CD4-positive, alpha-beta T cell (primary cell): ENCODE measurements at regions of chr1 and their contacts with region 1.

Region 1: GRCh38 chr1:201042779-201043461 is 19.4 kb upstream of the KIF21B start:
- DNase-seq: peak; percentile 60 to 86 (median 66)
- ATAC-seq: peak; percentile 99
- H3K4me3 ChIP-seq: no peak overlapping the region
- H3K4me3 Mint-ChIP-seq: no peak overlapping the region
- H3K27ac ChIP-seq: no peak overlapping the region
- H3K27ac Mint-ChIP-seq: no peak overlapping the region
- H3K4me1 ChIP-seq: peaks cover 7% of the 10 kb centered on the region
- H3K4me1 Mint-ChIP-seq: peaks cover 6% of the 10 kb centered on the region
- H3K27me3 ChIP-seq: no peaks in the 10 kb centered on the region
- H3K27me3 Mint-ChIP-seq: no peaks in the 10 kb centered on the region
- CTCF ChIP-seq: peak; percentile 90

Region 2: DNA sequence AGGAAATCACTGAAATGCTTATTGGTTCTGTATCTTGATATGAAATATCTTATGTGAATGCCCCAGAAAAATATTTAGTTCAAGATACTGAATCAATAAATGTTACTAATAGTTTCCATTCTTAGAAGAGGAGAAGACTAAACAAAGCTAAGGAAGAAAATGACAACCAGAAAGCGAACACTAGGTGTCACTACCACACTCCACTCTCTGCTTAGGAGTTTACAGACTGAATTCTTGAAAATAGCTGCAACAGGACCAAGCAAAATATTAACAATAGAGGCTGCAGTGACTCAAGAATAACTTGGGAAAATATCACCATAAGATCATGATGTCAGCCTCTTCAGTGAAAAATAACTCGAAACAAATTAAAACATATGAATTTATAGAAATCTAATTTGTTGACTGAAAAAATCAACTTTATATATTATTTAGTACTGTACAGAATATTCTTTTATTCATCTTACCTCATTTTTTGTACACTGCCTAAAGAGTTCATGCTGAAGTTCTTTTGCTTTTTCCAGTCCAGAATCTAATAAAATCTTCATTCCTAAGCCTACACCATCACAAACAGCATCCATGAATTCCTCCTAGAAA is 484.0 kb before region 1 on chr1:
- CTCF ChIA-PET with region 1: no interaction called
- POLR2A ChIA-PET with region 1: no interaction called
- intact Hi-C with region 1: loop called in 1 of 2 experiments (anchors 5 kb)
- DNase-seq: peak in 4 of 14 experiments; percentile 10 to 58 (median 45)
- ATAC-seq: no peak
- H3K4me3 ChIP-seq: no peak overlapping the region
- H3K4me3 Mint-ChIP-seq: no peak overlapping the region
- H3K27ac ChIP-seq: no peak overlapping the region
- H3K27ac Mint-ChIP-seq: no peak overlapping the region
- H3K4me1 ChIP-seq: no peaks in the 10 kb centered on the region
- H3K4me1 Mint-ChIP-seq: no peaks in the 10 kb centered on the region
- H3K27me3 ChIP-seq: no peaks in the 10 kb centered on the region
- H3K27me3 Mint-ChIP-seq: no peaks in the 10 kb centered on the region
- CTCF ChIP-seq: peak; percentile 67

Region 3: DNA sequence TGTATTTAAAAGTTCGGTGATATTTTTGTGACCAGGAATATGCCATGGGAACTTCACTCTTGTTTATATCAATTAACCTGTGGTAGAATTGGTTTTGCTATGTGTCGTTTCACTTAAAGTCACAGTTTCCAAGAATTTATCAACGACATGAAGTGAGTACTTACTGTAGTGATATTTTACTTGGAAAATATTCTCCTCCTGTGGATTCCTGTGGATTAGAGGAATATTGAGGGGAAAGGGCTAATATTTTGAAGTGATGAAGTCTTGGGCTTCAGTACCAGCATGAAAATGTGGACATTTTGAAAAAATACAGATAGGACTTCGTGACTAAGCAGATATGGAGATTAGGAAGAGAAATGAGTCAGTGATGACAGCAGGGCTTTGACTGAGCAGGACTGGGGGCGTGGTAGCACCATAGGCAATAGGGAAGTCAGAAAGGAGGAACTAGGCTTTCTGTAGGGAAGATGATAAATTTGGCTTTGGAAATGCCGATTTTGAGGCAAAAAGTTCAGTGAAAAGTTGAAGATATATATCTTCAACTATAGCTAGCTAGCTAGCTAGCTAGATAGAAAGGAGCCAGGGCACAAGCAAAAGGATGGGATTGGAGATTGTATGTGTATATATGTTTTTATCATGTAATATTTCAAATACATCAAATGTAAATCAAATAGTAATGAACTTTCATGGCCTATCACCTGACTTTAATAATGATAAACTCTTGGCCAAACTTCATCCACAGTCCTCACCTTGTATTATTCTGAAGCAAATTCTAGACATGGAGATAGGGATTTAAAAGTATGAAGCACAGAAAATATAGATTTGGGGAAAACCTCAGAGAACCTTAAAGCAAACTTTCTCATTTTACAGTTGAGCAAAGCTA is 402.9 kb before region 1 on chr1:
- CTCF ChIA-PET with region 1: no interaction called
- POLR2A ChIA-PET with region 1: no interaction called
- intact Hi-C with region 1: no loop called
- DNase-seq: peak in 3 of 14 experiments; percentile 26 to 70 (median 59)
- ATAC-seq: no peak
- H3K4me3 ChIP-seq: no peak overlapping the region
- H3K4me3 Mint-ChIP-seq: no peak overlapping the region
- H3K27ac ChIP-seq: no peak overlapping the region
- H3K27ac Mint-ChIP-seq: no peak overlapping the region
- H3K4me1 ChIP-seq: no peaks in the 10 kb centered on the region
- H3K4me1 Mint-ChIP-seq: no peaks in the 10 kb centered on the region
- H3K27me3 ChIP-seq: no peaks in the 10 kb centered on the region
- H3K27me3 Mint-ChIP-seq: no peaks in the 10 kb centered on the region
- CTCF ChIP-seq: no peak

Region 4: GRCh38 chr1:200802865-200803512 is 239.9 kb before region 1 on chr1:
- CTCF ChIA-PET with region 1: no interaction called
- POLR2A ChIA-PET with region 1: no interaction called
- intact Hi-C with region 1: loop called in 1 of 2 experiments (anchors 5 kb)
- DNase-seq: peak; percentile 55 to 87 (median 67)
- ATAC-seq: peak; percentile 95
- H3K4me3 ChIP-seq: no peak overlapping the region
- H3K4me3 Mint-ChIP-seq: no peak overlapping the region
- H3K27ac ChIP-seq: no peak overlapping the region
- H3K27ac Mint-ChIP-seq: no peak overlapping the region
- H3K4me1 ChIP-seq: no peaks in the 10 kb centered on the region
- H3K4me1 Mint-ChIP-seq: peaks cover 6% of the 10 kb centered on the region
- H3K27me3 ChIP-seq: no peaks in the 10 kb centered on the region
- H3K27me3 Mint-ChIP-seq: no peaks in the 10 kb centered on the region
- CTCF ChIP-seq: peak; percentile 93

Region 5: GRCh38 chr1:200979574-200980451 is 63.1 kb before region 1 on chr1:
- CTCF ChIA-PET with region 1: interaction called, 18 read pairs
- POLR2A ChIA-PET with region 1: interaction called, 4 read pairs
- intact Hi-C with region 1: loop called (anchors 1 to 2 kb)
- DNase-seq: peak; percentile 40 to 79 (median 57)
- ATAC-seq: peak; percentile 54
- H3K4me3 ChIP-seq: no peak overlapping the region
- H3K4me3 Mint-ChIP-seq: no peak overlapping the region
- H3K27ac ChIP-seq: no peak overlapping the region
- H3K27ac Mint-ChIP-seq: no peak overlapping the region
- H3K4me1 ChIP-seq: peaks cover 4% of the 10 kb centered on the region
- H3K4me1 Mint-ChIP-seq: no peaks in the 10 kb centered on the region
- H3K27me3 ChIP-seq: no peaks in the 10 kb centered on the region
- H3K27me3 Mint-ChIP-seq: no peaks in the 10 kb centered on the region
- CTCF ChIP-seq: peak; percentile 78